PC-9 (cell line): ENCODE measurements at regions of chr3 and their contacts with region 1.

Region 1: GRCh38 chr3:49387721-49388120 is 24.1 kb downstream of the RHOA start:
- DNase-seq: no peak
- H3K4me3 ChIP-seq: no peak overlapping the region
- H3K27ac ChIP-seq: no peak overlapping the region
- H3K4me1 ChIP-seq: no peaks in the 10 kb centered on the region
- H3K27me3 ChIP-seq: no peaks in the 10 kb centered on the region
- CTCF ChIP-seq: no peak

Region 2: GRCh38 chr3:49399461-49399860 is 11.7 kb after region 1 on chr3:
- CTCF ChIA-PET with region 1: no interaction called
- POLR2A ChIA-PET with region 1: interaction called, 20 read pairs
- intact Hi-C with region 1: no loop called
- DNase-seq: no peak
- H3K4me3 ChIP-seq: no peak overlapping the region
- H3K27ac ChIP-seq: no peak overlapping the region
- H3K4me1 ChIP-seq: no peaks in the 10 kb centered on the region
- H3K27me3 ChIP-seq: no peaks in the 10 kb centered on the region
- CTCF ChIP-seq: no peak